A549 (cell line): ENCODE measurements at regions of chrX and their contacts with region 1.

Region 1: GRCh38 chrX:103629318-103630170 is 769 bp downstream of the TCEAL1 start:
- DNase-seq: peak; percentile 31 to 86
- ATAC-seq: peak; percentile 92 to 95
- H3K4me3 ChIP-seq: peak overlapping the region; percentile 83
- H3K27ac ChIP-seq: peak overlapping the region; percentile 97
- H3K4me1 ChIP-seq: peaks cover 16% of the 10 kb centered on the region; the same call in 2 of the 3 replicates
- CTCF ChIP-seq: peak; percentile 85
- EP300 ChIP-seq: no peak
- POLR2A ChIP-seq: peak; percentile 68
- RAD21 ChIP-seq: peak; percentile 58 to 61

Region 2: DNA sequence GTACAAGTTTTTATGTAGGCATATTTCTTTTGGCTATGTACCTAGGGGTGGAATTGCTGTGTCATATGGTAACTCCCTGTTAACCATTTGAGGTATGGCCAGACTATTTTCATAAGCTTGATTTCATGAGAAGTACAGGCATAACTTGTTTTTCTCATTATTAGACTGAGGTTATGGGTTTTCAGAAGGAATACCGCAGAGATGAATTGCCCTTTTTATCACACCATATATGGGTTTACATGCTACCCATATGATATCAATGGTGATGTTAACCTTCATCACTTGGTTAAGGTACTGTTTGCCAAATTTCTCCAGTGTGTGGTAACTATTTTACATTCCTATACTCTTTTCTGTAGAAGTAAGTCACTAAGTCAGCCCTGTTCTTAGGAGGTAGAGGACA is 133.8 kb before region 1 on chrX:
- CTCF ChIA-PET with region 1: no interaction called
- POLR2A ChIA-PET with region 1: no interaction called
- DNase-seq: no peak
- ATAC-seq: no peak
- H3K4me3 ChIP-seq: no peak overlapping the region
- H3K27ac ChIP-seq: no peak overlapping the region
- H3K4me1 ChIP-seq: no peaks in the 10 kb centered on the region
- CTCF ChIP-seq: no peak
- EP300 ChIP-seq: no peak
- POLR2A ChIP-seq: no peak
- RAD21 ChIP-seq: no peak

Region 3: DNA sequence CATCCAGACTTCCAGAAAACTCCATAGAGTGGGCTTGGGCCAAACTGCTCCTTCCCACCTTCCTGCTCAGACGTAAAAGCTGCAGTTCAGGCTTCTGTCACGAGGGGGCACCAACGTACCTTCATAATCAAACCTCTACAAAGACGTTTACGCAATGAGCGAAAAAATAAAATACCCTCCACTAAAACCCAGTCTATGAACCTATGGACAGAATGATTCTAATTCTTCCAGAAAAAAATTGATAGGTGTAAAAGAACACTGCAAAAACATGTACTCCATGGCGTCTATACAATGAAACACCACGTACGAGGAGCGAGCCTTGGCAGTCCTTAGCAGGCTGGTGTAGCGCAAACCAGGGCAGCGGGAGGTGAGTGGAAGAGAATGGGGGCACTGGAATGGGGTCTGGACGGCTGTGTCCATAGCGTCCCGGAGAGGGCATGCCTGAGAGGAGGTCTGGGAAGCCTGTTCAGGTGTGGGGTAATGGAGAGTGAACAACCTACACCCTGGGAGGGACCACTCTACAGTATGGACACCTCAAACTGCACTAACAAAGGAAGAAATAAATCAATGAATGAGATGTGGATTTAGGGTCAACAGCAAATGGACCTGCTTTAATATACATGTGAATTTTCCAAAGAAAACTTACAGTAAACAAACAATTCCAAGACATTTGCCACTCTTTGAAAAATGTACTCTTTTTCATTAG is 95.9 kb before region 1 on chrX:
- CTCF ChIA-PET with region 1: interaction called, 13 read pairs
- POLR2A ChIA-PET with region 1: no interaction called
- DNase-seq: peak; percentile 8 to 66
- ATAC-seq: peak; percentile 79 to 88; a peak in 5 of 6 replicates
- H3K4me3 ChIP-seq: peak overlapping the region; percentile 37
- H3K27ac ChIP-seq: peak overlapping the region in 1 of 2 experiments; percentile 60; a peak in 1 of 6 replicates
- H3K4me1 ChIP-seq: no peaks in the 10 kb centered on the region
- CTCF ChIP-seq: peak; percentile 74
- EP300 ChIP-seq: no peak
- POLR2A ChIP-seq: no peak
- RAD21 ChIP-seq: peak; percentile 87 to 88

Region 4: GRCh38 chrX:103607364-103608305 is 21.9 kb before region 1 on chrX and contains the start of gene TCEAL3:
- CTCF ChIA-PET with region 1: interaction called, 13 read pairs
- POLR2A ChIA-PET with region 1: interaction called, 5 read pairs
- DNase-seq: peak in 1 of 2 experiments; percentile 15
- ATAC-seq: peak; percentile 91 to 93
- H3K4me3 ChIP-seq: peak within 1 kb of the TSS; percentile 88
- H3K27ac ChIP-seq: peak within 1 kb of the TSS; percentile 80 to 89
- H3K4me1 ChIP-seq: 0 out of 3 replicates have a peak, but pooled peaks cover 4% of the 10 kb centered on the region
- CTCF ChIP-seq: no peak
- EP300 ChIP-seq: no peak
- POLR2A ChIP-seq: peak; percentile 15; the same call in 1 of the 2 replicates
- RAD21 ChIP-seq: no peak
- polyA plus RNA-seq, gene TCEAL3: 3.6 and 6.6 TPM in 2 replicates

Region 5: GRCh38 chrX:103651151-103651783 is 21.7 kb after region 1 on chrX:
- CTCF ChIA-PET with region 1: interaction called, 25 read pairs
- POLR2A ChIA-PET with region 1: interaction called, 17 read pairs
- DNase-seq: no peak
- ATAC-seq: no peak
- H3K4me3 ChIP-seq: no peak overlapping the region
- H3K27ac ChIP-seq: no peak overlapping the region; a peak in 1 of 6 replicates
- H3K4me1 ChIP-seq: peaks cover 19% of the 10 kb centered on the region
- CTCF ChIP-seq: no peak
- EP300 ChIP-seq: no peak
- POLR2A ChIP-seq: no peak
- RAD21 ChIP-seq: no peak

Region 6: DNA sequence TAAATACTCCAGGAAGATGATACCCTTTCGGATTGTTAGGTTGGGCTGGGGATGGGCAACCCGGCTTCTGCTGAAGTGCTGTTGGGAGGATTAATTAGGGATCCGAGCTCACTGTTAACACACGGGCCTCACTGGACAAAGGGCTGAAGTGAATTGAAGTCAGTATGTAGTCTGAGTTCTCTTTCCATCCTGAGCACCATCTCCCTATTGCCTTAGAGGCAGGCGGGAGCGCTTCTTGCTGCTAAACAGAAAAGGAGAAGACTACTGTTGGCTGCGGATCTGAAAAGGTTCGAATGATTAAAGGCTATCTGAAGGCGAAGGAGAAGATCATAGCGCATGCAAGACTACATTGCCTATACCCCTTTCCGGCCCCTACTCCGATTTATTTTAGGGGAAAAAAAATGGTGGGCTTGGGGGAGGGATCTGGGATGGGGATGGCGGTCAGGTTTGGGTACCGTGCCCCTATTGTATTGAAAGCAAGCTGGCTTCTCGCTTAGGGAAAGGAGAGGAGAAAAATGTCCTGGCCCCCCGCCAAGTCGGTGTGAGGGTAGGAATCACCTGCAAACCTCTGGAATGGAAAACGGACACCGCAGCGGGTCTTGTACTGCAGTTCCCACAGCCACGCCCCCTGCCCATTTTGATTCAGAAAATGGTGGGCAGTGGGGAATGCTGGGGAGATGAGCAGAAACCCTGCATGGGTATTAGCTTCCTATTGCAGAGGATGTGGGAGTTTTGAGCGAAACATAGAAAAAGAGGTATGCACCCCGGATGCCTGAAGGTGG is 34.6 kb after region 1 on chrX:
- CTCF ChIA-PET with region 1: interaction called, 21 read pairs
- POLR2A ChIA-PET with region 1: interaction called, 3 read pairs
- DNase-seq: no peak
- ATAC-seq: no peak
- H3K4me3 ChIP-seq: no peak overlapping the region
- H3K27ac ChIP-seq: no peak overlapping the region
- H3K4me1 ChIP-seq: peaks cover 4% of the 10 kb centered on the region; the same call in 2 of the 3 replicates
- CTCF ChIP-seq: no peak
- EP300 ChIP-seq: no peak
- POLR2A ChIP-seq: no peak
- RAD21 ChIP-seq: no peak

Region 7: GRCh38 chrX:103686199-103687072 is 56.9 kb after region 1 on chrX and contains the start of gene MORF4L2:
- CTCF ChIA-PET with region 1: interaction called, 19 read pairs
- POLR2A ChIA-PET with region 1: interaction called, 23 read pairs
- DNase-seq: peak; percentile 81 to 99
- ATAC-seq: peak; percentile 94 to 95
- H3K4me3 ChIP-seq: peak within 1 kb of the TSS; percentile 99
- H3K27ac ChIP-seq: peak within 1 kb of the TSS; percentile 96 to 100
- H3K4me1 ChIP-seq: peaks cover 30% of the 10 kb centered on the region
- CTCF ChIP-seq: no peak
- EP300 ChIP-seq: no peak
- POLR2A ChIP-seq: peak; percentile 93
- RAD21 ChIP-seq: no peak
- polyA plus RNA-seq, gene MORF4L2: 572 and 582 TPM in 2 replicates